ENCODE measurements at regions of chr4 and their contacts with region 1.

Region 1: DNA sequence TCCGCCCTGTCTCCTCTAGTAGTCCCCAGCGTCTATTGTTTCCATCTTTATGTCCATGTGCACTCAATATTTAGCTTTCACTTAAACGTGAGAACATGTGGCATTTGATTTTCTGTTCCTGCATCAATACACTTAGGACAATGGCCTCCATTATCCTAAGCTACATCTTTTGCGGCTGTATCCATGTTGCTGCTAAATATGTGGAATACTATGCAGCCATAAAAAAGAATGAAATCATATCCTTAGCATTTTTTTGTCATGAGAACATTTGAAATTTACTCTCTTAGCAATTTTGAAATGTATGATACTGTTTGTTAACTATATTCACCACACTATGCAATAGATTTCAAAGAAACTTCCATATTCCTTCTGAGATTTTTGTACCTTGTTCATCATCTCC is 19.8 kb upstream of the CD38 start:
- DNase-seq: no peak

Region 2: DNA sequence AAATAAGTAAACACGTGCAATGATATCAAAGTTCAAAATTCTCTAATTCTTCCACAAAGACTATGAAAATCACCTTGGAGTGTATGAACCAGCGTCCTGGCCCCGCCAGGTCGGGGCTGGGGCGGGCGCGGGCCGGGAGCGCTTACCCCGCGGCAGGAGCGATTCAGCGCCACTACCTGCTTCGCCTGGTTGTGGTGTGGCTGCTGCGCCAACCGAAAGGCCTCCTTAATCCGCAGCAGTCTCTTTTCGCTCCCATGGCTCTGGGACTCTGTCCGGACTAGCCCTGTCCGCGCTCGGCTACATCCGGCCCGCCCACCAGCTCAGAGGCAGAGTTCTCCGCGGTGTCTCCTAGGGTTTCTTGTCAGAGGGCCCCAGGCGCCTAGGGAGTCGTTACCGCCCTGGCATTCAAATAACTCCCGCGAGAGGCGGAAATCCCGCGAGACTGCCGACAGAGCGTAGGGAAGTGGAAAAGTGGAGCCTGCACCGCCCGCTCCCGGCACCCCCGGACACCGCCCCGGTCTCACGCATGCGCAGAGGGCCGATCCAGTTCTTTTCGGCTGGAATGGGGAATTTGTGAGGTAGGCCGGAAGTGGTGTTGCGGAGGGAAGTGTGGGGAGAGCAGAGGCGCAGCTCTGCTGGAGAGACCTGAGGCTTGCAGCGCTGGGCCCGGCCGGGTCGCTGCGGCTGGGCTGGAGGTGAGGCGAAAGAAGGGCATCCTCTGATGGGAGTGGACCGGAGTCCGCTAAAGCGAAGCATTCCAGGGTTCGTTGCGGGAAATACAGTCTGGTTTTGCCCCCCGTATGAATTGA is 76.9 kb before region 1 on chr4 and contains the start of gene FAM200B:
- intact Hi-C with region 1: loop called in 1 of 2 experiments (anchors 2 kb)
- DNase-seq: peak; percentile 100
- total RNA-seq, gene FAM200B: 30.4 to 36.8 TPM

Region 3: GRCh38 chr4:17614416-17615299 is 1856.4 kb after region 1 on chr4 and contains the start of gene MED28:
- intact Hi-C with region 1: no loop called
- DNase-seq: peak; percentile 99
- total RNA-seq, gene MED28: 34.4 to 41.6 TPM

Measured in posterior vena cava (tissue), 2 donors.